ENCODE measurements at regions of chr16 and their contacts with region 1.

Region 1: DNA sequence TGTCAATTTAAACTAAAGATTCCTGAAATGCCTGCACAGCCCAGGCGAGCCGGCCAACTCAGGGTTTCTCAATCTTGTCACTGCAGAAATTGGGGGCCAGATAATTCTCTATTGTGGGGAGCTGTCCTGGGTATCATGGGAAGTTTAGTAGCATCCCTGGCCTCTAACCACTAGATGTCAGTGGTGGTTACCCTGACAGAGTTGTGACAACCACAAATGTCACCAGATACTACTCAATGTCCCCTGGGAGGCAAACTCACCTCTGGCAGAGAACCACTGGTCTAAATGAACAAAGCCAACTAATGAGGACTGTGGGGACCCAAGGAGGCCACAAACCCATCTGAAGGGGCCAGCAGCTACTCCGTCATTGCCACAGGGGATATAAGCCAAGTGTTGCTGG is 90.9 kb downstream of the MYH11 start:
- DNase-seq: no peak
- ATAC-seq: peak; percentile 32 to 50
- H3K4me3 ChIP-seq: no peak overlapping the region
- H3K27ac ChIP-seq: no peak overlapping the region
- H3K4me1 ChIP-seq: no peaks in the 10 kb centered on the region
- H3K27me3 ChIP-seq: no peaks in the 10 kb centered on the region

Region 2: DNA sequence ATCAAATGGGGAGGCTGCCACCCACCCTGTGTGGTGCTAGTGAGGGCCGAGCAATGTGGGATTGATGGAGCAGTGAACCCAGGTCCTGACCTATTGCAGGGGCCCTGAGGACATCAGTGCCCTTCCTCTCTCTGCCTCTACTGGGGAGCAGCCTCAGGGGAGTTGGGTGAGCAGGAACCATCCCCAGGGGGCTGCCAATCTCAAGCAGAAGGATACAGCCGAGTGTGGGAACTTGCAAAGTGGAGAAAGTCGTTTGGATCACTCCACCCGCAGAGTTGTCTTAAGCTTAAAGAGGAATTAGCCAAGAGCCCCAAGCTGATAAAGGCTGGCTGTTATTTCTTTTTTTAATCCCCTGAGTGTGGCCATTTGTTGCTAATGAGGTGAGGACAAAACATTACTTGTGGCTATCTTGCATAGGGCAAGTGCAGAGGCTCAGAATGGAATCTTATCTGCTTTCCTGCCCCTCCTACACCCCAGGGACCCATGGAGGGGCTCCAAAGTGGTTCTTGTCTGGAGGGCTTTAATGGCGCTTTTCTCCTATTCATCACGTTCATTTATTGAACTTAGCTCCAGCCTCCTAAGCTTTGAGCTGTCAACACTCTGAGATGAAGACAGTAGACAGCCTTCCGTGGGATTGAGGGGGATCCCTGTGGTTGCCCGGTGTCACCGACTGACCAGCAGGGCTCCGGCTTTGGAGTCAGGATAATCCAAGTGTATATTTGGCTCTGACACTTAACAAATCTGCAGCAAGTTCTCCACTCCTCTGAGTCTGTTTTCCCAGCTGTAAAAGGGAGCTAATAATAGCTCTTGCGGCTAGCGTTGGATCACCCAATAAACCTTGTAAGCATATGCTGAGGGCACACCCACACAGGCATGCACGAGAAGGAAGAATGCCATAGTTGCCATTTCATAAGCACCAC is 45.9 kb after region 1 on chr16:
- intact Hi-C with region 1: loop called in 2 of 4 experiments (anchors 5 kb)
- DNase-seq: peak; percentile 63 to 81 (median 70)
- ATAC-seq: peak; percentile 92 to 93
- H3K4me3 ChIP-seq: no peak overlapping the region
- H3K27ac ChIP-seq: peak overlapping the region; percentile 91
- H3K4me1 ChIP-seq: peaks cover 6% of the 10 kb centered on the region
- H3K27me3 ChIP-seq: no peaks in the 10 kb centered on the region

Region 3: DNA sequence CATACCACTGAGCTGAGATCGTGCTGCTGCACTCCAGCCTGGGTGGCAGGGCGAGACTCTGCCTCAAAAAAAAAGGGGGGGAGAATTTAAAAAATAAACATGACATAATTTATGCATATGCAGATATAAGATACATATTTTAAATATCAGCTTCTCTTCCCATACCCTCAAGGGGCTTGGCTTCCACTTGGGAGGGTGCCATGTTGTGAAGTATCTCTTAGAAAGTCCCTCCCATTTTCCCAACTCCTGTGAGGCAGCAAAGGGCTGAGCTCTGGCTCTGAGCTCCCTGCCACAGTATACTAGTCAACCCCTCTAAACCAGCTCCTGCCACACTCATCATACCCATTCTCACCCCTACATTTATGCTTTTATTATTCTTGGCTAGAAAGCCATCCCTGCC is 51.6 kb after region 1 on chr16:
- intact Hi-C with region 1: loop called (anchors 5 to 10 kb)
- DNase-seq: no peak
- ATAC-seq: no peak
- H3K4me3 ChIP-seq: no peak overlapping the region
- H3K27ac ChIP-seq: no peak overlapping the region
- H3K4me1 ChIP-seq: no peaks in the 10 kb centered on the region
- H3K27me3 ChIP-seq: no peaks in the 10 kb centered on the region

Region 4: GRCh38 chr16:15822957-15823356 is 57.1 kb after region 1 on chr16:
- intact Hi-C with region 1: loop called (anchors 5 to 10 kb)
- DNase-seq: peak in 1 of 3 donors; percentile 47
- ATAC-seq: peak; percentile 24 to 50
- H3K4me3 ChIP-seq: no peak overlapping the region
- H3K27ac ChIP-seq: no peak overlapping the region
- H3K4me1 ChIP-seq: no peaks in the 10 kb centered on the region
- H3K27me3 ChIP-seq: no peaks in the 10 kb centered on the region

Region 5: DNA sequence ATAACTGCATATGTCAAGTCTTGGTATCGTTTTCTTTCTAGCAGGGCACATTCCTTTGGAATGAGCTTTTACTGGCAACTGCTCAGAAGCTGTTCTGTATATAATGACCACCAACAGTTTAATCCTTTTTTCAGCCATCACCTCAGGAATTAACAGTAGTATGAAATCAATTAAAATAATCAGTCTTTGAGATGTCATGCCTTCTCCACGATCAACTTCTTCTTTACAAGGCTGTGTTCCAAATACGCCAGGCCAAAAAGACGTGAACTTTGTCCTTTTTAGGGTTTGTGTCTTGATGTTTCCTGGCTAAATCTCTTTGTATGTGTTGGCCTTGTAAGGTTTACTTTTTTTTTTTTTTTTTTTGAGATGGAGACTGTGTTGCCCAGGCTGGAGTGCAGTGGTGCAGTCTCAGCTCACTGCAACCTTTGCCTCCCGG is 238.5 kb after region 1 on chr16:
- intact Hi-C with region 1: no loop called
- DNase-seq: no peak
- ATAC-seq: no peak
- H3K4me3 ChIP-seq: no peak overlapping the region
- H3K27ac ChIP-seq: no peak overlapping the region
- H3K4me1 ChIP-seq: no peaks in the 10 kb centered on the region
- H3K27me3 ChIP-seq: no peaks in the 10 kb centered on the region

Region 6: GRCh38 chr16:16127469-16128116 is 361.7 kb after region 1 on chr16:
- intact Hi-C with region 1: loop called in 1 of 4 experiments (anchors 10 kb)
- DNase-seq: peak; percentile 55 to 83 (median 77)
- ATAC-seq: peak; percentile 81 to 86
- H3K4me3 ChIP-seq: no peak overlapping the region
- H3K27ac ChIP-seq: no peak overlapping the region
- H3K4me1 ChIP-seq: no peaks in the 10 kb centered on the region
- H3K27me3 ChIP-seq: no peaks in the 10 kb centered on the region